Activated T-helper 2 cell treated with anti-CD3 and anti-CD28 coated beads, Interferon-gamma antibody, Interleukin-2, Interleukin-4, amounts not matched to agents 10 μg/mL and 5 μg/mL and 100 μg/mL, durations not matched to agents 14 hours and 24 hours and 36 hours (primary cell): ENCODE measurements at regions of chr2 and their contacts with region 1.

Region 1: DNA sequence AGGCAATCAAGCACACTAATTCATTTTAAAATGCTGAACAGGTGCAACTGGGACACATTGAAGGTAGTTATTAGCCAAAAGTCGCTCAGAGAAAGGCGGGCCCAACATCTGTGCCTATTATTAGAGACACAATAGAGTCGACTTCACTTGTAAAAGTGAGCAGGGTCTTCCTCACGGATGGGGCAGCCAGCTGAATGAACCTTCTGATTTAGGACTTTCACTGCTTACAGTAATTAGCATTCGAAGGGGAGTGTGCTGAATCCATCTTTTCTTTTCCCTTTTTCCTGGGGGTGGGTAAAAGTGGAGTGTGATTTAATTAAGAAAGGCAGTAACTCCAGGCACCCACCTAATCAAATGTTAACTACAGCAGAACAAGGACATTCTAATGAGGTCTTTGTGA is 677.7 kb downstream of the DCDC2C start:
- DNase-seq: no peak
- H3K4me3 Mint-ChIP-seq: no peak overlapping the region
- H3K27ac Mint-ChIP-seq: no peak overlapping the region
- H3K4me1 Mint-ChIP-seq: no peaks in the 10 kb centered on the region
- H3K27me3 Mint-ChIP-seq: no peaks in the 10 kb centered on the region

Region 2: DNA sequence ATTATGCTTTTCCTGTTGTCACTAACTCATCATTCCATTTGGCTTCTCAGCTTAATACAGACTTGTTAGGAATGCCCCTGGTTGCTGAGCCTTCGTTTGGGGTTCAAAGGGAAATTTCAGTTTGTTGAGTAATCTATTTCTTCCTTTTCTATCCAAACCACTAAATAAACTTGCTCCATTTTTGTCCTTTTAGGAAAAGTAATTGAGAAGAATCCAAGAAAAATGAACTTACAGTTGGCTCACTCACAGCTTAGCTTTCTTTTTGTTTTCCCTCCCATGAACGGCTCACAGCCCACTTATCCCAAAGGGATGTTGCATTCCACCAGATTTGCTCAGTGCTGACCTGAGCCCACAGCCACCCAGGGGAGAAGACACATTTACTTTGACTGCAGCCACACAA is 1385.0 kb after region 1 on chr2:
- intact Hi-C with region 1: loop called (anchors 5 kb)
- DNase-seq: no peak
- H3K4me3 Mint-ChIP-seq: no peak overlapping the region
- H3K27ac Mint-ChIP-seq: no peak overlapping the region
- H3K4me1 Mint-ChIP-seq: no peaks in the 10 kb centered on the region
- H3K27me3 Mint-ChIP-seq: no peaks in the 10 kb centered on the region